ENCODE measurements at regions of chr11 and their contacts with region 1.

Region 1: DNA sequence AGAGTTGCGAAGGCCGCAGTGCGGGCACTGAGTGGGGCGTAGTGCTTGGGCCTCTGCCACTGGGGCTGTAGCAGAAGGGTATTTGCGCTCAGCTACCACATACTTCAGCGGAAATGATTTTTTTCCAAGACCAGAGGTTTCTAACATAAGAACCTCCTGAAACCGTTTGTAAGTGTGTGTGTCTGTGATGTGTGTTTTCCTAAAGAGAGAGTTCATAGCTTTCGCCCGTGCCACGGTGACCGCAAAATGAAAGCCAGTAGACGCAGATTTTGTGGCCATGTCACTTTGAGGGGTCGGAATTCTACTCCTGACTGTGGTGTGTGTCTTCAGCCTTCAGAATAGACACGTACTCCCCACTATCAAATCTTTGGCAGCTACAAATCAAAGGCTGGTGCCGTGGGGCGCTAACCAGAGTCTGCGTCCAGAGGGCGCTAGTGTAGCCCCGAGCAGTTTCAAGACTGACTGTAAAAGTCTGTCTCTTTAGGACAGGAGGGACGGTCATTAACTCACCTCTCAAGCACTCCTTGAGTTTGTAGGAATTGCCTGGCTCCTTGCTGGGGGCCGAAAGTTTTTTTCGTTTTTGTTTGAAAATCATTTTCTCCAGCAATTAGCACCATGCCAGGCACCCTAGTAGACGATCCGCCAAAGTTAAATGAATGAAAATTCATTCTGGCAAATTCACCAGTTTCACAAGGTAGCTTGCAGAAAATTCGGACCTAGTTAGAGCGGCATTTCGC is 2.5 kb upstream of the CALCA start:
- DNase-seq: peak in 1 of 2 experiments; percentile 85
- H3K4me3 ChIP-seq: peak overlapping the region; percentile 34 to 55 (median 39); a peak in 7 of 8 replicates
- H3K27ac ChIP-seq: no peak overlapping the region
- H3K4me1 ChIP-seq: peaks cover 11 to 24% (median 15%) of the 10 kb centered on the region in 4 experiments
- H3K27me3 ChIP-seq: peaks cover 51 to 78% (median 63%) of the 10 kb centered on the region in 4 experiments
- CTCF ChIP-seq: peak; percentile 81 to 92 (median 82)
- EP300 ChIP-seq: no peak
- POLR2A ChIP-seq: no peak
- RAD21 ChIP-seq: peak; percentile 53 to 64

Region 2: GRCh38 chr11:14619603-14620531 is 354.8 kb before region 1 on chr11:
- CTCF ChIA-PET with region 1: interaction called, 10 read pairs
- POLR2A ChIA-PET with region 1: no interaction called
- DNase-seq: no peak
- H3K4me3 ChIP-seq: no peak overlapping the region
- H3K27ac ChIP-seq: no peak overlapping the region
- H3K4me1 ChIP-seq: no peaks in the 10 kb centered on the region
- H3K27me3 ChIP-seq: peaks cover 0 to 1% (median 0%) of the 10 kb centered on the region in 4 experiments; a peak in 1 of 7 replicates
- CTCF ChIP-seq: no peak
- EP300 ChIP-seq: no peak
- POLR2A ChIP-seq: no peak
- RAD21 ChIP-seq: no peak

Region 3: GRCh38 chr11:14954581-14954980 is 20.1 kb before region 1 on chr11:
- CTCF ChIA-PET with region 1: interaction called, 24 read pairs
- POLR2A ChIA-PET with region 1: interaction called, 3 read pairs
- DNase-seq: no peak
- H3K4me3 ChIP-seq: no peak overlapping the region
- H3K27ac ChIP-seq: no peak overlapping the region
- H3K4me1 ChIP-seq: no peaks in the 10 kb centered on the region
- H3K27me3 ChIP-seq: no peaks in the 10 kb centered on the region; a peak in 2 of 7 replicates
- CTCF ChIP-seq: no peak
- EP300 ChIP-seq: no peak
- POLR2A ChIP-seq: no peak
- RAD21 ChIP-seq: no peak

Region 4: GRCh38 chr11:15011776-15012175 is 37.1 kb after region 1 on chr11:
- CTCF ChIA-PET with region 1: interaction called, 75 read pairs
- POLR2A ChIA-PET with region 1: no interaction called
- DNase-seq: no peak
- H3K4me3 ChIP-seq: no peak overlapping the region
- H3K27ac ChIP-seq: no peak overlapping the region
- H3K4me1 ChIP-seq: no peaks in the 10 kb centered on the region
- H3K27me3 ChIP-seq: no peaks in the 10 kb centered on the region
- CTCF ChIP-seq: no peak
- EP300 ChIP-seq: no peak
- POLR2A ChIP-seq: no peak
- RAD21 ChIP-seq: no peak

Region 5: GRCh38 chr11:15074206-15075161 is 99.8 kb after region 1 on chr11:
- CTCF ChIA-PET with region 1: interaction called, 83 read pairs
- POLR2A ChIA-PET with region 1: no interaction called
- DNase-seq: peak; percentile 73 to 98
- H3K4me3 ChIP-seq: peak overlapping the region; percentile 40 to 68 (median 56)
- H3K27ac ChIP-seq: no peak overlapping the region; the same call in 1 of the 2 replicates
- H3K4me1 ChIP-seq: peaks cover 0 to 4% (median under 1%) of the 10 kb centered on the region in 4 experiments; a peak in 2 of 7 replicates
- H3K27me3 ChIP-seq: peaks cover 4 to 24% (median 20%) of the 10 kb centered on the region in 4 experiments
- CTCF ChIP-seq: peak; percentile 78 to 93 (median 90)
- EP300 ChIP-seq: no peak
- POLR2A ChIP-seq: no peak
- RAD21 ChIP-seq: peak; percentile 81 to 86

Region 6: DNA sequence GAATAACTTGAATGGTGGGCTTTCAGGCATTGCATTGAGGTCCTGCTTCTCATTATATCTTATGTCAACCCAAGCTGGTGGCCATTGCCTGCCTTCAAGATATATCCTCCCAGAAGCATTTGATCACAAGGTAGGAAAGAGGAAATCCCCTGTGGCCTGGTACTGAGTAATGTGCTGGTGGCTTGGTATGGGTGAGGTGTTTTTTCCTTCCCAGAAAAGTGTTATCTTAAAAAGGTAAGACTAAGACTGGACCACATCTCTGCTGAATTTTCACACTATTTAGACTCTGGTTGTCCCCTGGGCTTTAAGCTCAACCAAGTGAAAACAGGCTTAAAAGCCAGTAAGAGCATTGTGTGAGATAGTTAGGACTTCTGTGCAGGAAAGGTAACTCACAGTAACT is 143.7 kb after region 1 on chr11:
- CTCF ChIA-PET with region 1: interaction called, 10 read pairs
- POLR2A ChIA-PET with region 1: no interaction called
- DNase-seq: no peak
- H3K4me3 ChIP-seq: no peak overlapping the region
- H3K27ac ChIP-seq: no peak overlapping the region
- H3K4me1 ChIP-seq: peaks cover 0 to 3% (median under 1%) of the 10 kb centered on the region in 4 experiments; a peak in 1 of 7 replicates
- H3K27me3 ChIP-seq: peaks cover 0 to 24% (median 17%) of the 10 kb centered on the region in 4 experiments; a peak in 5 of 7 replicates
- CTCF ChIP-seq: no peak
- EP300 ChIP-seq: no peak
- POLR2A ChIP-seq: no peak
- RAD21 ChIP-seq: no peak

Region 7: GRCh38 chr11:15406851-15407351 is 432.2 kb after region 1 on chr11:
- CTCF ChIA-PET with region 1: no interaction called
- POLR2A ChIA-PET with region 1: no interaction called
- DNase-seq: no peak
- H3K4me3 ChIP-seq: no peak overlapping the region
- H3K27ac ChIP-seq: no peak overlapping the region
- H3K4me1 ChIP-seq: no peaks in the 10 kb centered on the region
- H3K27me3 ChIP-seq: no peaks in the 10 kb centered on the region
- CTCF ChIP-seq: no peak
- EP300 ChIP-seq: no peak
- POLR2A ChIP-seq: no peak
- RAD21 ChIP-seq: no peak

Measured in H1 (cell line).